RWPE1 (cell line): ENCODE measurements at regions of chr4 and their contacts with region 1.

Region 1: DNA sequence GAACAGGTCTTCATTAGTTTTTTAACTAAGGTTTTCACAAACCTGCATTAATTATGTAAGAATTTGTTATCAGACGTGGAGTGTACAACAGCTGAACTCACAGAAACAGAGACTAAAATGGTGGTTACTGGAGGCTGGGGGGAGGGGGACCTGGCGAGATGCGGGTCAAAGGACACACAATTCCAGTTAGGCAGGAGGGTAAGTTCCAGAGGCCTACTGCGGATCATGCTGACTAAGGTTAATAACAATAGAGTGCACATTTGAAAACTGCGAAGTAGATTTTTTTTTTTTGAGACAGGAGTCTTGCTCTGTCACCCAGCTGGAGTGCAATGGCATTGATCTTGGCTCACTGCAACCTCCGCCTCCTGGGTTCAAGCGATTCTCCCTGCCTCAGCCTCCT is 7.6 kb downstream of the AGA start:
- DNase-seq: no peak
- H3K27ac ChIP-seq: no peak overlapping the region
- CTCF ChIP-seq: no peak

Region 2: GRCh38 chr4:177381762-177382290 is 52.8 kb before region 1 on chr4:
- CTCF ChIA-PET with region 1: no interaction called
- POLR2A ChIA-PET with region 1: interaction called, 18 read pairs
- DNase-seq: no peak
- H3K27ac ChIP-seq: no peak overlapping the region
- CTCF ChIP-seq: no peak

Region 3: GRCh38 chr4:177673985-177674489 is 239.4 kb after region 1 on chr4:
- CTCF ChIA-PET with region 1: no interaction called
- POLR2A ChIA-PET with region 1: no interaction called
- DNase-seq: no peak
- H3K27ac ChIP-seq: no peak overlapping the region
- CTCF ChIP-seq: no peak